K562 (cell line): ENCODE measurements at regions of chr11 and their contacts with region 1.

Region 1: GRCh38 chr11:65506770-65507505 is 8.1 kb downstream of the MALAT1 start:
- DNase-seq: peak in 1 of 4 experiments; percentile 92
- ATAC-seq: peak; percentile 73
- H3K4me3 ChIP-seq: peak overlapping the region; percentile 84
- H3K27ac ChIP-seq: peak overlapping the region; percentile 99
- H3K4me1 ChIP-seq: peaks cover 8% of the 10 kb centered on the region in 2 experiments; a peak in 4 of 5 replicates
- H3K27me3 ChIP-seq: no peaks in the 10 kb centered on the region
- CTCF ChIP-seq: 0 out of 6 replicates have a peak, but pooled peaks of 1 of the 3 experiments have one; percentile 6
- EP300 ChIP-seq: no peak; the same call in 1 of the 2 replicates
- POLR2A ChIP-seq: peak; percentile 99
- RAD21 ChIP-seq: peak; percentile 14 to 42; a peak in 3 of 4 replicates

Region 2: GRCh38 chr11:65366340-65366773 is 140.6 kb before region 1 on chr11:
- CTCF ChIA-PET with region 1: interaction called, 7 read pairs
- POLR2A ChIA-PET with region 1: interaction called, 29 read pairs
- in situ Hi-C with region 1: loop called (anchors 5 kb)
- intact Hi-C with region 1: loop called (anchors 1 kb)
- DNase-seq: peak; percentile 70 to 83 (median 76)
- ATAC-seq: peak; percentile 82
- H3K4me3 ChIP-seq: no peak overlapping the region
- H3K27ac ChIP-seq: peak overlapping the region; percentile 12; the same call in 2 of the 3 replicates
- H3K4me1 ChIP-seq: peaks cover 34 to 40% of the 10 kb centered on the region in 2 experiments; a peak in 4 of 5 replicates
- H3K27me3 ChIP-seq: no peaks in the 10 kb centered on the region
- CTCF ChIP-seq: peak; percentile 74 to 93 (median 78)
- EP300 ChIP-seq: no peak
- POLR2A ChIP-seq: no peak
- RAD21 ChIP-seq: peak; percentile 90 to 93

Region 3: DNA sequence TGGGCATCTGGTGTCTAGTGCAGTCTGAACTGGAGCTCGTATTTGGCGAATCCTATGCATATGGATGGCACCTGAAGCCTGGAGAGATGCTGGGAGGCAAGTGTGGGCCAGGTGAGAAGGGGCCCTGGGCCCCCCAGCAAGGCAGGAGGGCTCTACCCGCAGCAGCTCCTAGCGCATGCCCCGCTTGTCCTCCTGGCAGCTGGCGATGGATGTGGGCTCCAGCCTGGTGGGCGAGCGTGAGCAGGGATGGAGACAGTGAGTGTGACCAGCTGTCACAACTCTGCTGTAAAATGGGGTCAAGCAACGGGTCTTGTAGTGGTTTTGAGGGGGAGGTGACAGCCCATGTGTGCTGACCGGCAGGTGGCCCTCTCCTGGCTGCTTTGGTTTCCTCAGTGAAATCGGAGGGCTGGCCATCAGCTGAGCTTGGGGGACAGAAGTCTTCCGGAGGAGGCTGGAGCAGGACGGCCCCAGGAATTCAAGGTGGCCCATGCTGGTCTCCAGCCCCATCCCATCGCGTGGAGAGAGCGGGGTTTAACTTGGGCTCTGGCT is 108.5 kb before region 1 on chr11:
- CTCF ChIA-PET with region 1: no interaction called
- POLR2A ChIA-PET with region 1: interaction called, 10 read pairs
- in situ Hi-C with region 1: no loop called
- intact Hi-C with region 1: no loop called
- DNase-seq: no peak
- ATAC-seq: peak; percentile 23; the same call in 2 of the 3 replicates
- H3K4me3 ChIP-seq: no peak overlapping the region
- H3K27ac ChIP-seq: no peak overlapping the region
- H3K4me1 ChIP-seq: peaks cover 2 to 52% of the 10 kb centered on the region in 2 experiments; a peak in 4 of 5 replicates
- H3K27me3 ChIP-seq: no peaks in the 10 kb centered on the region
- CTCF ChIP-seq: peak in 2 of 3 experiments; percentile 23 to 39; a peak in 3 of 6 replicates
- EP300 ChIP-seq: no peak
- POLR2A ChIP-seq: no peak
- RAD21 ChIP-seq: no peak

Region 4: GRCh38 chr11:65412331-65413076 is 94.4 kb before region 1 on chr11:
- CTCF ChIA-PET with region 1: interaction called, 21 read pairs
- POLR2A ChIA-PET with region 1: interaction called, 1,349 read pairs
- in situ Hi-C with region 1: loop called (anchors 5 kb)
- intact Hi-C with region 1: loop called (anchors 1 kb)
- DNase-seq: no peak
- ATAC-seq: no peak
- H3K4me3 ChIP-seq: no peak overlapping the region
- H3K27ac ChIP-seq: no peak overlapping the region
- H3K4me1 ChIP-seq: peaks cover 18 to 36% of the 10 kb centered on the region in 2 experiments
- H3K27me3 ChIP-seq: no peaks in the 10 kb centered on the region
- CTCF ChIP-seq: no peak
- EP300 ChIP-seq: no peak
- POLR2A ChIP-seq: no peak
- RAD21 ChIP-seq: no peak

Region 5: DNA sequence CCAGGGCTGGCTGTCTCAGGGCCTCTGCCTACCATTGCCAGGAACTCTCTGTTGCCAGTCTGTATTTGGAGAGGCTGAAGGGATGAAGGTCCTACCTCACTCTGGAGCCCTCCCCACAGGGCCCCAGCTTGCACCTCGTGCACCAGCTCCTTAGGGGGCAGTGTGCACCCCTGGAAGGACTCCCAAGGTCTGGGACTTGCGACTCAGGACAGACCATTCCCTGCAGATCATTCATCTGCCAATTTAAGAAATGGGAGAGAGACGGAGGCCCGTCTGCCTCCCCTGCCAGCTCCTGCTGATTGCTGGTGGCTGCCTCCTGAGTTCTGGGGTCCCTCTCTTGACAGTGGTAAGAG is 35.6 kb before region 1 on chr11:
- CTCF ChIA-PET with region 1: interaction called, 6 read pairs
- POLR2A ChIA-PET with region 1: interaction called, 2,118 read pairs
- in situ Hi-C with region 1: loop called (anchors 5 kb)
- intact Hi-C with region 1: loop called (anchors 1 kb)
- DNase-seq: peak; percentile 63 to 91 (median 77)
- ATAC-seq: peak; percentile 88
- H3K4me3 ChIP-seq: peak overlapping the region; percentile 42
- H3K27ac ChIP-seq: peak overlapping the region; percentile 96
- H3K4me1 ChIP-seq: peaks cover 38 to 55% of the 10 kb centered on the region in 2 experiments
- H3K27me3 ChIP-seq: no peaks in the 10 kb centered on the region
- CTCF ChIP-seq: peak; percentile 81 to 94 (median 94)
- EP300 ChIP-seq: no peak
- POLR2A ChIP-seq: no peak
- RAD21 ChIP-seq: peak; percentile 76 to 91